ENCODE measurements at regions of chr12 and their contacts with region 1.

Region 1: GRCh38 chr12:108664338-108665258 is 30.9 kb upstream of the SELPLG start:
- DNase-seq: peak; percentile 78
- H3K4me3 ChIP-seq: no peak overlapping the region; a peak in 1 of 4 replicates
- H3K27ac ChIP-seq: peak overlapping the region; percentile 84 to 91
- H3K4me1 ChIP-seq: peaks cover 46 to 61% of the 10 kb centered on the region in 2 experiments
- H3K27me3 ChIP-seq: no peaks in the 10 kb centered on the region
- CTCF ChIP-seq: peak; percentile 93
- EP300 ChIP-seq: peak in 1 of 2 experiments; percentile 18; a peak in 1 of 4 replicates
- RAD21 ChIP-seq: peak; percentile 100

Region 2: DNA sequence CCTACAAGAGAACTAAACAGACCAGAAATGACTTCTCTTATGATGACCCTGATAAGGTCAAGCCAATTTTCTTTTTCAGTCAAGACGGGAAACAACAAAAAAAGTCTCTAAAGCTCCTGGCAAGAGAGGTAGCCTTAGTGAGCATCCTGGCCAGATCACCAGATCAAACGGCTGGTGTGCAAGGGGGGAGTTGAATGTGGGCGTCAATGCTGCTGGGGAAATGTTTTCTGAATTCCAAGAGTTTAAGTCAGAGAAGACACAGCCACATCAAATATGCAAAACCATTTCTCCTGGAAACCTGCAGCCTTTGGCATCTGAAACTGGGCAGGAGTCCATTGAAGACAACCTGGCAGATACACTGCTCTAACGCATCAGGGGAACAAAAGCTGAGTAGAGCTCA is 14.9 kb before region 1 on chr12:
- CTCF ChIA-PET with region 1: interaction called, 19 read pairs
- POLR2A ChIA-PET with region 1: no interaction called
- DNase-seq: no peak
- H3K4me3 ChIP-seq: no peak overlapping the region
- H3K27ac ChIP-seq: peak overlapping the region; percentile 82 to 87
- H3K4me1 ChIP-seq: peaks cover 4 to 37% of the 10 kb centered on the region in 2 experiments; a peak in 3 of 4 replicates
- H3K27me3 ChIP-seq: no peaks in the 10 kb centered on the region
- CTCF ChIP-seq: no peak
- EP300 ChIP-seq: peak; percentile 44 to 95
- RAD21 ChIP-seq: no peak

Region 3: GRCh38 chr12:108701779-108702441 is 37.3 kb after region 1 on chr12:
- CTCF ChIA-PET with region 1: interaction called, 14 read pairs
- POLR2A ChIA-PET with region 1: no interaction called
- DNase-seq: no peak
- H3K4me3 ChIP-seq: no peak overlapping the region
- H3K27ac ChIP-seq: peak overlapping the region; percentile 35 to 90
- H3K4me1 ChIP-seq: peaks cover 38 to 50% of the 10 kb centered on the region in 2 experiments; a peak in 3 of 4 replicates
- H3K27me3 ChIP-seq: no peaks in the 10 kb centered on the region
- CTCF ChIP-seq: no peak
- EP300 ChIP-seq: no peak
- RAD21 ChIP-seq: no peak

Region 4: DNA sequence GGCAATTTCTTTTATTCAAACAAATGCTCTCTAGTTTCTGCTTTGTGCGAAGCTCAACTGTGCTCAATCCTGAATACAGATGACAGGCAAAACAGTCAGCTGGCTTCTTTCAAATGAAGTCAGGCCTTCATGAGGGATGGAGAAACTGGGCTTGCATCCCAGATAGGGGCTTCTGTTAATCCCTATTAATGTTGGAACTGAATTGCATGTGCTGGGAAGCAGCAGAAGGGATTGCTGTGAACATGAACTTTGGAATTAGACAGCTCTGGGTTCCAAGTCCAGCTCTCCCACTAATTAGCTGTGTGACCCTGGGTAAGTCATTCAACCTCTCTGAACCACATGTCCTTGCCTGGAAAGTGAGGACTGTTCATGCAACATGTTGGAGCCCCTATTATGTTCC is 87.8 kb after region 1 on chr12:
- CTCF ChIA-PET with region 1: interaction called, 13 read pairs
- POLR2A ChIA-PET with region 1: no interaction called
- DNase-seq: no peak
- H3K4me3 ChIP-seq: no peak overlapping the region
- H3K27ac ChIP-seq: no peak overlapping the region
- H3K4me1 ChIP-seq: peaks cover 8 to 11% of the 10 kb centered on the region in 2 experiments; a peak in 2 of 4 replicates
- H3K27me3 ChIP-seq: no peaks in the 10 kb centered on the region
- CTCF ChIP-seq: no peak
- EP300 ChIP-seq: no peak
- RAD21 ChIP-seq: no peak

Region 5: DNA sequence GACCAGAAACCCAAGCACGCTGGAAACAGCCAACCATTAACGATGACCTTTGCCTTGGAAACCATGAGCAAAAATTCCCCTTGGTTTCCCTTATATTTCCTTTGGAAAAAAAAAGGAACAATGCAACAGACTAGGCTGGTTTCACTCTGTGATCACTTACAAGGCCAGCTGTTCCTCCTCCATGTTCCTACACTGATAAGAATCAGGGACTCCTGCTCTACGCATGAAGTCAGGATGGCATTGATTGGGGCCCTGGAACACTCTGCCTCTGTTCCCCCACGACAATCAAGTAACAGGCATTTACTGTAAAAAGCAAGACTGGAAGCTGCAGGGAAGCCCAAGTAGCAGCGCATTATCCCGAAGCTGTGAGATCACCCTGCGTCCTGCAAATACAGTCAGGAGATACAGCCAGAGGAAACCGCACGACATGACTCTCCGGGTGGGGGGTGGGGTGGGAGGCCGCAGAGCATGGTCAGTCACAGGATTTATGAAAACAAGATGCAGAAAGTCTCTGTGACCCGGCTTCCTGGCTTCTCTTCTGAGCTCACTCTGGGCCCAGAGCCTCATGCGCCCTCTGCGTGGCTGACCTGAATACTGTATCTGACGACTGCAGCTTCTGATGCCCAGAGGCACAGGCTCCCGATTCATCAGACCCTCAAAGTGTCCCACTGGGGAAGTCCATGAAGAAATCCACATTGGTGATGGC is 161.7 kb after region 1 on chr12:
- CTCF ChIA-PET with region 1: interaction called, 14 read pairs
- POLR2A ChIA-PET with region 1: interaction called, 4 read pairs
- DNase-seq: peak; percentile 79
- H3K4me3 ChIP-seq: peak overlapping the region; percentile 1 to 37; a peak in 3 of 4 replicates
- H3K27ac ChIP-seq: peak overlapping the region; percentile 99 to 100
- H3K4me1 ChIP-seq: peaks cover 54 to 74% of the 10 kb centered on the region in 2 experiments
- H3K27me3 ChIP-seq: no peaks in the 10 kb centered on the region
- CTCF ChIP-seq: no peak; the same call in 1 of the 2 replicates
- EP300 ChIP-seq: peak; percentile 10 to 68; a peak in 3 of 4 replicates
- RAD21 ChIP-seq: no peak; the same call in 1 of the 2 replicates

Region 6: GRCh38 chr12:108879615-108880254 is 215.1 kb after region 1 on chr12 and contains the start of gene DAO:
- CTCF ChIA-PET with region 1: no interaction called
- POLR2A ChIA-PET with region 1: no interaction called
- DNase-seq: no peak
- H3K4me3 ChIP-seq: no peak within 1 kb of the TSS
- H3K27ac ChIP-seq: no peak within 1 kb of the TSS
- H3K4me1 ChIP-seq: no peaks in the 10 kb centered on the region; a peak in 1 of 4 replicates
- H3K27me3 ChIP-seq: no peaks in the 10 kb centered on the region
- CTCF ChIP-seq: no peak
- EP300 ChIP-seq: no peak
- RAD21 ChIP-seq: no peak
- polyA plus RNA-seq, gene DAO: not detected in 2 replicates

Measured in SK-N-SH (cell line).